Astrocyte of the cerebellum (primary cell): ENCODE measurements at regions of chr20 and their contacts with region 1.

Region 1: DNA sequence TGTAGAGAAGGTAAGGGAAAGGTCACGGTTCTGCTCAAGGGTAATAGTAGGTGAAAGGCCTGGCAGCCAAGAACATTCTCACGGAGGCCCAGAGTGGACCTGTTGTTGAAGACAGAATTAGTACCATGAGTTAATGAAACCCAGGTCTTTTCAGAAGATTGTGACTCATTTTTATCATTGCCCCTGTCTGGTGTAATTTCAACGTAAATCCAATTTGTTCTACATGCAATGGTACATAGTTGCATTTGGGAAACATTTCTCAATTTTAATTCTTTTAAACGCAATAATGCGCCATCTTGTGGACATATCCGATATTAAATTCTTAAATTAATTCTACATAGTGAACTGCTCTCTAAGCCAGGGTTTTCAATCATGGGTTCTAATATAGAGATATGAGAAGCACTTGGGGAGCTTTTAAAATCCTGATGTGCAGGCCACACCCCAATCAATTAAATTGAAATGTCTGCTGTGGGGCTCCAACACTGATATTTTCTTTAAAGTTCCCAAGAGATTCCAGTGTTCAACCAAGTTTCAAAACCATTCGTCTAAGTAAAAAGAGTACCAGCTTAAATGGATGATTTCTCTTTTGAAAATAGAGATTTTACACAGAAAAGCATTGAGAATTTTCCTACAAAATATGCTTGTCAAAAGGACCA is 257.4 kb downstream of the PLCB1 start:
- DNase-seq: peak; percentile 53
- H3K4me3 ChIP-seq: no peak overlapping the region
- CTCF ChIP-seq: no peak

Region 2: GRCh38 chr20:8131598-8132483 is 257.7 kb before region 1 on chr20 and contains the start of gene PLCB1:
- in situ Hi-C with region 1: loop called (anchors 10 kb)
- DNase-seq: peak; percentile 60
- H3K4me3 ChIP-seq: peak within 1 kb of the TSS; percentile 49
- CTCF ChIP-seq: peak; percentile 87